BJ (cell line): ENCODE measurements at regions of chr13 and their contacts with region 1.

Region 1: DNA sequence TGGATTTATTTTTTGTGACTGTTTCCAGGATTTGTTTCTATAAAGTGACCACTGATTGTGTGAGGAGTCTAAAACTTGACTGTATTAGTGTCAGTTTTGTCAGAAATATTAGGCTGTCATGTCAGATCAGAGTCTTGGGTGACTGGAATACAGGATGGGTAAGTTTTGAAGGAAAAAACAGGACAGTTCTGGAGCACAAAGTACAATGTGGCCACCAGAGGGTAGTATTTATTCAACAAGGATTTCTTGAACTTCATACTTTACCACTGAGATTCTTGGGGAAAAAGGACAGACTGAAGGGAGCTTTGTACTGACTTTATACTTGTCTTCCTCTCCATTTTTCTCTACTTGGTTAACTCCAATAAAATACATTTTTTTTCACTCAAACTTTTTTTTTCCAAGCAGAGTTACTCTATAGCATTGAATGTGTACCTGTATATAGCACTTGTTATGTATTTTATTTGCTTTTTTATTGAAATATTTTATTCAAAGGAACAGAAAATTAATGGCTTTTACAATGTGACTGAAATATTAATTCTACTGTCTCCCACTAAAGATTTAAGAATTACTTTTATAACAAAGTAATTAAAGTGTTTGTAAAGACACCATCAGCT is 51.1 kb downstream of the LMO7 start:
- DNase-seq: no peak
- H3K4me3 ChIP-seq: no peak overlapping the region
- H3K27me3 ChIP-seq: no peaks in the 10 kb centered on the region
- CTCF ChIP-seq: peak; percentile 52

Region 2: GRCh38 chr13:75666646-75667351 is 20.5 kb before region 1 on chr13:
- CTCF ChIA-PET with region 1: interaction called, 10 read pairs
- POLR2A ChIA-PET with region 1: no interaction called
- DNase-seq: no peak
- H3K4me3 ChIP-seq: no peak overlapping the region
- H3K27me3 ChIP-seq: no peaks in the 10 kb centered on the region
- CTCF ChIP-seq: no peak

Region 3: DNA sequence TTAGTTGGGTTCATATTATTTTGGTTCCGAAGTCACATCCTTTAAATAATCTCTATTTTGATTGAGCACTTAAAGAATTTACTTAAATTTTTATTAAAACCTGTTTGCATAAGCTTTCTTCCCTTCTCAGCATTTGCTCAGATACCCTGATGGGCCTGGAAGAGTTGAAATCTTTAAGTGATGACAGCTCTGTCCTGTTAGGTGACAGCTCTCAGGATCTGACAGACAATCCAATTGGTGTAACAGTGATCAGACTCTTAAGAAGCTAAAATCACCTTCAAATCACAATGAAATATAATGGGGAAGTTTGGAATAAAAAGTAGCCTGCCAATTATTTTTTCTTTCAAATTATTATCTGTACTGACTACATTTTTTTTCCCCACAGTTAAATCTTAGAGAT is 233.3 kb after region 1 on chr13:
- CTCF ChIA-PET with region 1: no interaction called
- POLR2A ChIA-PET with region 1: no interaction called
- DNase-seq: no peak
- H3K4me3 ChIP-seq: no peak overlapping the region
- H3K27me3 ChIP-seq: peaks cover under 1% of the 10 kb centered on the region; the same call in 1 of the 2 replicates
- CTCF ChIP-seq: no peak